ENCODE measurements at regions of chr2 and their contacts with region 1.

Region 1: GRCh38 chr2:50492477-50492851 is 539.5 kb downstream of the NRXN1 start:
- DNase-seq: no peak
- ATAC-seq: peak in 3 of 4 donors; percentile 68 to 88 (median 78)
- H3K4me3 ChIP-seq: no peak overlapping the region
- H3K27ac ChIP-seq: no peak overlapping the region
- H3K4me1 ChIP-seq: peaks cover 3% of the 10 kb centered on the region
- H3K27me3 ChIP-seq: no peaks in the 10 kb centered on the region
- CTCF ChIP-seq: peak; percentile 60

Region 2: DNA sequence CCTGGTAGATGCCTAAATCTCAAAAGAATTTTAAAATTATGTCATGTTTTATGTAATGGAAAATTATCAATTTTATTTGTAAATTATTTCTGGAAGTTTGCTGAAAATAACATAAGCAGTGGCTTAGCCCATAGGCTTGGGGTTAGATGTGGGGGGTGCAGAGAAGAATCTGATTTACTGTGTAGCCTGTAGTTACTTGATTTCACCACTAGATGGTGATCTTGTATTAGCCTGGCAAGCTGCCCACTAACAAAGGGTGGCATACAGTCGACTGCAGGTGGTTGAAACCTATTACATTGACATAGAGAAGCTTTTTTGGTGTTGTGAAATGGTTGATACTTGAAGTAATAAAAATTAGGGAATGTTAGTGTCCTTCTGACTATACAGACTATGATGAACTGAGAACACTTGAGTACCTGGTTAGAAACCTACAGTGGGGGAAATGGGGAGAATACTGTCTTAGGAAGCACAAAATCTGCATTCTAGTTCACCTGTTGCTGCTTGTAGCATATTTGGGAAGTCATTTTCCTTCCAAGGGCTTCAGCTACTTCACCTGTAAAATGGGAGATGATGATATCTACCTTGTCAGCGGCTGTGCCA is 1545.9 kb before region 1 on chr2:
- intact Hi-C with region 1: loop called (anchors 5 kb)
- DNase-seq: no peak
- ATAC-seq: peak; percentile 64 to 79 (median 73)
- H3K4me3 ChIP-seq: no peak overlapping the region
- H3K27ac ChIP-seq: no peak overlapping the region
- H3K4me1 ChIP-seq: no peaks in the 10 kb centered on the region
- H3K27me3 ChIP-seq: no peaks in the 10 kb centered on the region
- CTCF ChIP-seq: peak; percentile 88

Measured in psoas muscle (tissue), 8 donors.